Adrenal gland (tissue), 19 donors: ENCODE measurements at regions of chr2 and their contacts with region 1.

Region 1: GRCh38 chr2:207879536-207879935 is 109.8 kb upstream of the FZD5 start:
- DNase-seq: no peak
- H3K4me3 ChIP-seq: no peak overlapping the region
- H3K27ac ChIP-seq: peak overlapping the region in 1 of 5 donors; percentile 6
- H3K4me1 ChIP-seq: peaks cover 8 to 18% of the 10 kb centered on the region in 2 donors
- H3K27me3 ChIP-seq: no peaks in the 10 kb centered on the region
- CTCF ChIP-seq: no peak
- POLR2A ChIP-seq: no peak

Region 2: DNA sequence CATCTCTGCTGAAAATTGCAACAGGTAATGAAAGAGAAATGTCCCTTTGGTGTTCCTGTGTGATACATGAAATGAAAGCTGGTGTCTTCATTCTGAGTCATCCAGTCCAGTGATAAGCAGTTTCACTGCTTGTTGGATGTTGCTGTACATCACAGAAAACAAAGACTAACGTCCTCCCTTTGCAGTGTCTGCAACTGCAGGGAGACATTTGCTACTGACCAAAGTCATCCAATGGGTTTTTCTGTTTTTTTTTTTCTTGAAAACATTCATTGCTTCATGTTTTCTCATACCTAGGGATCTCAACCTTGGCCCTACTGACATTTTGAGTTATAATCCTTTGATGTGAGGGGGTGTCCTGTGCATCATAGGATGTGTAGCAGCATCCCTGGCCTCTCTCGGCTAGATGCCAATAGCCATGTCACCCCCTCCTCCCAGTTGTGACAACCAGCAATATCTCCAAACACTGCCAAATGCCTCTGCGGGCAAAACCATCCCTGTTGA is 46.2 kb before region 1 on chr2:
- intact Hi-C with region 1: loop called in 1 of 2 experiments (anchors 5 kb)
- DNase-seq: peak in 4 of 7 donors; percentile 20 to 41 (median 27)
- H3K4me3 ChIP-seq: no peak overlapping the region
- H3K27ac ChIP-seq: peak overlapping the region in 2 of 5 donors; percentile 21 to 27
- H3K4me1 ChIP-seq: peaks cover 5 to 34% of the 10 kb centered on the region in 2 donors
- H3K27me3 ChIP-seq: no peaks in the 10 kb centered on the region
- CTCF ChIP-seq: no peak
- POLR2A ChIP-seq: no peak